ENCODE measurements at regions of chr15 and their contacts with region 1.

Region 1: GRCh38 chr15:47196057-47196456 is 521.2 kb upstream of the SEMA6D start:
- DNase-seq: peak; percentile 80 to 86
- ATAC-seq: peak; percentile 97 to 100 (median 98)
- H3K4me3 ChIP-seq: no peak overlapping the region
- H3K27ac ChIP-seq: no peak overlapping the region
- H3K4me1 ChIP-seq: no peaks in the 10 kb centered on the region
- H3K27me3 ChIP-seq: no peaks in the 10 kb centered on the region
- CTCF ChIP-seq: peak; percentile 85

Region 2: DNA sequence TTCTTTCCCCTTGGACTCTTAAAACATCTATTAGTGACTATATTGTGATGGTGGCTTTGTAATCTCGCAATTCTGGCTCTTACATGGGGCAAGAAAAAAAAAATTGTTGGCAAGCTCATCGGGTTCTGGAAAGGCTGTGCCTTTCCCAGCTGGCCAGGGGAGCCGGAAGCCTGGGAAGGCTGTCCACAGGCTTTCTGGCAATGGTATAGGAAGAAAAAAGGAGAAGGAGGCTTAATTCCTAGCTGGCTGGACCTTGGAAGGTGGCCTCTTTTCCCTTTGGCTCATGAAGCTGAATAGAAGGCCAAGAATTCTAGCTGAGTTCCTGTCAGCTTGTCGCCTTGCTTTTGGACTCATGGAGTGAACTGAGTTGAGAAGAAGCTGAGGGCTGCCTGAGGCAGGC is 277.8 kb after region 1 on chr15:
- intact Hi-C with region 1: loop called in 1 of 2 experiments (anchors 10 kb)
- DNase-seq: peak; percentile 48 to 68
- ATAC-seq: peak; percentile 44 to 81 (median 70)
- H3K4me3 ChIP-seq: no peak overlapping the region
- H3K27ac ChIP-seq: no peak overlapping the region
- H3K4me1 ChIP-seq: peaks cover 18% of the 10 kb centered on the region
- H3K27me3 ChIP-seq: no peaks in the 10 kb centered on the region
- CTCF ChIP-seq: no peak

Region 3: GRCh38 chr15:47717036-47717611 is 521.1 kb after region 1 on chr15 and contains the start of gene SEMA6D:
- intact Hi-C with region 1: loop called in 1 of 2 experiments (anchors 10 kb)
- DNase-seq: peak; percentile 76 to 89
- ATAC-seq: peak; percentile 82 to 87 (median 84)
- H3K4me3 ChIP-seq: peak within 1 kb of the TSS; percentile 74
- H3K27ac ChIP-seq: peak within 1 kb of the TSS; percentile 91
- H3K4me1 ChIP-seq: peaks cover 28% of the 10 kb centered on the region
- H3K27me3 ChIP-seq: no peaks in the 10 kb centered on the region
- CTCF ChIP-seq: peak; percentile 63
- total RNA-seq, gene SEMA6D: 3.5 to 7.4 (median 3.7) TPM

Region 4: GRCh38 chr15:47987908-47988532 is 792.0 kb after region 1 on chr15:
- intact Hi-C with region 1: loop called (anchors 1 to 2 kb)
- DNase-seq: no peak
- ATAC-seq: peak; percentile 81 to 93 (median 84)
- H3K4me3 ChIP-seq: no peak overlapping the region
- H3K27ac ChIP-seq: no peak overlapping the region
- H3K4me1 ChIP-seq: no peaks in the 10 kb centered on the region
- H3K27me3 ChIP-seq: no peaks in the 10 kb centered on the region
- CTCF ChIP-seq: peak; percentile 84

Region 5: GRCh38 chr15:48352474-48353072 is 1156.5 kb after region 1 on chr15:
- intact Hi-C with region 1: loop called in 1 of 2 experiments (anchors 10 kb)
- DNase-seq: peak in 1 of 2 donors; percentile 27
- ATAC-seq: peak in 2 of 4 donors; percentile 75 to 79
- H3K4me3 ChIP-seq: no peak overlapping the region
- H3K27ac ChIP-seq: no peak overlapping the region
- H3K4me1 ChIP-seq: no peaks in the 10 kb centered on the region
- H3K27me3 ChIP-seq: peaks cover 0 to 3% (median 0%) of the 10 kb centered on the region in 3 donors
- CTCF ChIP-seq: peak; percentile 75